GM10248 (cell line): ENCODE measurements at regions of chr3 and their contacts with region 1.

Region 1: DNA sequence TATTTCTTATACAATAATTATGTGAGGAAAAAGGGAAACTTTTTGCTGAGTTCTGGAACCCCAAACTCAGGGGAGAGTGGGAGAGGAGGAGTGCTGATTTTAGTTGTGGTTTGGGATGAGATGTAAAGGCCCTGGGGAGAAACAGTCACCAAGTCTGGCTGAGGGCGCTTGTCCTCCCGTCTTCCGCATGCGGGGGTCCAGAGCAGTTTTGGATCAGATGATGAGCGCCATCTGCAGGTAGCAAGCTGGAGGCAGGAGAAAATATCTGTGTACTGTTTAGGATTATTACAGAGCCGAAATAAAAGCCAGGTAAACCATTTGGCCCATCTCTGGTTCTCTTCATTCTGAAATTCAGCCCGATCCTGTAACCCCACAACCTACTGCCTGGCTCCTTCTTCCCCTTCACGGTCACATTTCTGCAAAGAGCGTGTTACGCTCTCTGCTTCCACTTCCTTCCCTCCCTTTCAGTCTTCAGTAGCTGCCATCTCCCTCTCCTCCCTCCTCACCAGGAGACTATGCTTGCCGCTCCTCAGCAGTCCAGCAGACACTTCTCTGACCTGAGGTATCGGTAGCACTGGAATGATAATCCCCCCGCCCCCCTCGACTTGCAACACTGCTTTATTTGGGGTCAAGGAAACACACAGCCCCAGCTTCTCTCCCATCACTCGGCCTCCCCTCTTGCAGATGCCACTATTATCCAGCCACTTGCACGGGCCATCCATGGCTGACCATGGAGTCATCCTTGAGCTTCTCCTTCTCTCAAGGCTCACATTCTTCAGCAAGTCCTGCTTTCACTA is 1.4 kb upstream of the PARP14 start:
- DNase-seq: peak; percentile 67
- CTCF ChIP-seq: peak; percentile 72

Region 2: GRCh38 chr3:122377975-122378374 is 301.3 kb before region 1 on chr3:
- CTCF ChIA-PET with region 1: no interaction called
- POLR2A ChIA-PET with region 1: no interaction called
- DNase-seq: no peak
- CTCF ChIP-seq: no peak

Region 3: DNA sequence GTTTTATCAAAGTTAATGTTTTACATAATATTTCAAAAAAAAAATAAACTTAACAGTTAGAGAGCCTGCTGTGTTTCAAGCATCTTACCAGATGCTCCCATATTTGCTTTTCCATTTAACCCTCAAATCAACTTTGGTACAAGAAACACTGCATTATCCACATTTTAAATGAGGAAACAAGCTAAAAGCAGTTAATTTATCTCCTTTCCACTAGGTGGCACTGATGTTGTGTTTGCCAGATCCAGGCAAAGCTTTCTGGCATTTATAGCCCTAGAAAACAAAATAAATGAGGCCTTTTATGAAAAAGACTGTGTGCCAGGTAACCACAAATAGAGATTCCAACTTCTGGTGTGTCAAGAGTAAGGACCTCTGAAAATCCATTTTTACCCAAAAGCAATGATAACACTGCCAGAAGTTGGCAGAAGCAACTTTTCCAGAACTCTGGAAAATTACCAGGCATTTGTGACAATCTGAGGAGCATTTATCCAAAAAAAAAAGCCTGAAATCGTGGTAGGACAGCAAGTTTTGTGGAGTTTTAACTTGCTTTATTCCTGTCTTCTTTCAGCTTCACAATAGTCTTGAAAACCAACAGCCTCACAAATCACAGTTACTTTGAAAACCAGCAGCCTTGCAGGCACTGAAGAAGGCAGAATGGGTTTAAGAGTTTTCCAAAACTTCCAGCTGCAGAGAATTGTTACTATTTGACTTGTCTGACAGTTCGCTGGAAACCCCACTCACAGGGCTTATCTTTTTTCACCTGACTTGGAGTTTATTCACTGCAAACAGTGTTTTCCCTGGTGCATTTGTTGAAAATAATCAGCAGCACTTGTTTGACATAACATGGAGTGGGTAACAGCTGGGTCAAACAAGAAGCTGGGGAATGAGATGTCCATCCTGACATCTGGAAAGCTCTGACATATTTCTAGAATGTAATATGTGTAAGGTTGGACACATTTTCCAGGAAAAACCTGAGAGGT is 286.1 kb before region 1 on chr3:
- CTCF ChIA-PET with region 1: interaction called, 13 read pairs
- POLR2A ChIA-PET with region 1: no interaction called
- DNase-seq: peak; percentile 41
- CTCF ChIP-seq: peak; percentile 58

Region 4: DNA sequence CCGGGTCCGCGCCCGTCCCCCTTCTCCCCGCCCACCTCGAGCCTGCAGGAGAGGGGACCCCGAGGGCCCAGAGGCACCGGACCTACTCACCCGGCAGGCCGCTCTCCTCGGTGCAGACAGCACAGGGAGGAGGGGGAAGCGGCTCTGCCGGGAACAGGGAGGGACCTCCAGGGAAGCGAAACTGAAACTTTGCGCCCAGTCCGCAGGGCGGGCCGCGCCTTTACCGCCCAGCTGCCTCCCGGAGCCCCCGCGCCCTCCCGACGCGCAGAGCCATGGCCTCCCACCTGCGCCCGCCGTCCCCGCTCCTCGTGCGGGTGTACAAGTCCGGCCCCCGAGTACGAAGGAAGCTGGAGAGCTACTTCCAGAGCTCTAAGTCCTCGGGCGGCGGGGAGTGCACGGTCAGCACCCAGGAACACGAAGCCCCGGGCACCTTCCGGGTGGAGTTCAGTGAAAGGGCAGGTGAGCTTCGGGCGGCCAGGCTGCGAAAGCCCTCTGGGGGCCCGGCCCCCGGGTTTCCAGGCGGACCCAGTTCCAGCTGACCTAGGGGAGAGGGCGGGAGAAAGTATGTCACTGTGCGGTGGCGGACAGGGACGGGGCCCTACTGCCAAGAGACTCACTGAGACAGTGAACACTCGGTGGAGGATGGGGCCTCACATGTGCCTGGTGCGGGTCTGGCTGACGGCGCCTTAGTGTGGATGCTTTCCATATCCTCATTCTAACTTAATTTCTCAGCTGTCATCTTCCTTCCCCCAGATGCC is 114.9 kb before region 1 on chr3 and contains the starts of genes DTX3L and PARP9:
- CTCF ChIA-PET with region 1: interaction called, 146 read pairs
- POLR2A ChIA-PET with region 1: interaction called, 4 read pairs
- DNase-seq: peak; percentile 80
- CTCF ChIP-seq: no peak

Region 5: GRCh38 chr3:122598556-122598955 is 80.7 kb before region 1 on chr3:
- CTCF ChIA-PET with region 1: interaction called, 12 read pairs
- POLR2A ChIA-PET with region 1: no interaction called
- DNase-seq: no peak
- CTCF ChIP-seq: no peak

Region 6: GRCh38 chr3:122628569-122628968 is 50.7 kb before region 1 on chr3:
- CTCF ChIA-PET with region 1: interaction called, 21 read pairs
- POLR2A ChIA-PET with region 1: no interaction called
- DNase-seq: no peak
- CTCF ChIP-seq: no peak

Region 7: GRCh38 chr3:122697952-122698620 is 18.8 kb after region 1 on chr3:
- CTCF ChIA-PET with region 1: interaction called, 17 read pairs
- POLR2A ChIA-PET with region 1: no interaction called
- DNase-seq: peak; percentile 54
- CTCF ChIP-seq: no peak